GM23248 (cell line): ENCODE measurements at regions of chr18 and their contacts with region 1.

Region 1: GRCh38 chr18:12005538-12006487 is 24.5 kb downstream of the IMPA2 start:
- DNase-seq: peak; percentile 26
- H3K4me3 ChIP-seq: no peak overlapping the region
- H3K27ac ChIP-seq: no peak overlapping the region
- H3K4me1 ChIP-seq: peaks cover 7% of the 10 kb centered on the region; the same call in 1 of the 2 replicates
- H3K27me3 ChIP-seq: no peaks in the 10 kb centered on the region

Region 2: DNA sequence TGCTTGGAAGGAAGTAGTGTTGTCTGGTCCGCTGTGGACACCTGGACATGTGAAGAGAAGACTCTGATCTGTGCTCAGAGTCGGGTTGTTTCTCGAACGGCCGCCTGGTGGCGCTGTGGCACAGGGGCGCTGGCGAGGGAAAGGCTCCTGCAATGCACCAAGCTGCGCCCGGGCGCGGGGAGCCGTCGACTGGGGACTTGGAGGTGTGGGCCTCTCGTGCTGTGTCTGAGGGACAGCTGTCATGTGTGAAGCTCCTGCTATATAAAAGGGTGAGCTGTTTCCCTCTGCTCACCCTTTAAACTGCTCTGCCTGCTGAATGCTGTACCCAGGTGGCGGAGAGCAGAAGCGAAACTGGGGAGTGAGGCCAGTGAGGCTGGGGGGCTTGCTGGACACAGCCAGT is 272.8 kb before region 1 on chr18:
- in situ Hi-C with region 1: loop called (anchors 10 kb)
- DNase-seq: peak; percentile 70
- H3K4me3 ChIP-seq: no peak overlapping the region
- H3K27ac ChIP-seq: no peak overlapping the region
- H3K4me1 ChIP-seq: no peaks in the 10 kb centered on the region
- H3K27me3 ChIP-seq: peaks cover 35% of the 10 kb centered on the region